ENCODE measurements at regions of chr14 and their contacts with region 1.

Region 1: DNA sequence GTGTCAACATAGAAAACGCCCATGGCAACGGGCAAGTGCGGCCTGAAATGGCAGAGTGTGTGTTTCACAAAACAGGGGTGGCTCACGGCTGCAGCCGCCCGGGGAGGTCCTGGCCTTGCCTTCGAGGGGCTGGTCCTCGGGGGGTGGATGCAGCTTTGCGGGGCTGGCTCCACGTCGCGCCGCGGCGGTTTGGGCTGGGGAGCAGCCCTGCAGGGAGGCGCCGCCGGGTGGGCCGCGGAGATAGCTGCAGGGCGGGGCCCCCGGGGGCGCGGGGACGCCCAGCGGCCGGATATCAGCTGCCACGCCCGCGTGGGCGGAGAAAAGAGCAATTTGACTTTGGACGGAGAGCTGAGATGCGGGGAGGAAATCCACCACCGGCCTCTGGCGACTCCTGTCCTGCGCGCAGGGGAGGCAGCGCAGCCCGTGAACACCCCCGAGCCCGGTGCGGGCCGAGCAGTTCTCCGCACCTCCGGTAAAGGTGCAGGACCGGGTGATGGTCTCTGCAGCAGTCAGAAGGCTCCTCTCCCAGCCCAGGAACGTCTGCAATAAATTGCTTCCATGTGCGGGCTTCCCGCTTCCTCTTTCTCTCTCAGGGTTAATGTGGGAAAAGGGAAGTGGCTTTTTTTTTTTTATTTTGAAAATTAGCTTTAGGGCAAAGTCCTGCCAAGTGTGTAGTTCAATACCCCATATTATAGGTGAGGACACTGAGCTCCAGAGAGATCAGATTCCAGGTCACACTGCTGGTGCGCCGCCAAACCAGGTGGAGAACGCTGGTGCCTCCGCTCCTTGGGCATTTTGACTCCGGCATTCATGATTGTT is 110.5 kb downstream of the ARF6 start:
- DNase-seq: peak; percentile 89 to 90
- H3K4me3 ChIP-seq: peak overlapping the region; percentile 49
- H3K4me3 Mint-ChIP-seq: peak overlapping the region; percentile 88
- H3K27ac Mint-ChIP-seq: peak overlapping the region; percentile 97
- H3K4me1 ChIP-seq: peaks cover 76% of the 10 kb centered on the region
- H3K4me1 Mint-ChIP-seq: peaks cover 41% of the 10 kb centered on the region
- H3K27me3 ChIP-seq: no peaks in the 10 kb centered on the region
- H3K27me3 Mint-ChIP-seq: no peaks in the 10 kb centered on the region
- CTCF ChIP-seq: peak; percentile 19 to 27

Region 2: GRCh38 chr14:49862089-49862673 is 141.2 kb before region 1 on chr14:
- CTCF ChIA-PET with region 1: interaction called, 14 read pairs
- POLR2A ChIA-PET with region 1: interaction called, 9 read pairs
- intact Hi-C with region 1: loop called (anchors 1 kb)
- DNase-seq: peak; percentile 77 to 84
- H3K4me3 ChIP-seq: peak overlapping the region; percentile 69
- H3K4me3 Mint-ChIP-seq: no peak overlapping the region
- H3K27ac Mint-ChIP-seq: no peak overlapping the region
- H3K4me1 ChIP-seq: peaks cover 5% of the 10 kb centered on the region; the same call in 1 of the 2 replicates
- H3K4me1 Mint-ChIP-seq: peaks cover 11% of the 10 kb centered on the region
- H3K27me3 ChIP-seq: no peaks in the 10 kb centered on the region
- H3K27me3 Mint-ChIP-seq: peaks cover 3% of the 10 kb centered on the region
- CTCF ChIP-seq: peak; percentile 100

Region 3: GRCh38 chr14:49892636-49893308 is 110.7 kb before region 1 on chr14 and contains the start of gene ARF6:
- CTCF ChIA-PET with region 1: interaction called, 13 read pairs
- POLR2A ChIA-PET with region 1: interaction called, 13 read pairs
- intact Hi-C with region 1: loop called (anchors 1 kb)
- DNase-seq: peak; percentile 98 to 99
- H3K4me3 ChIP-seq: peak within 1 kb of the TSS; percentile 84
- H3K4me3 Mint-ChIP-seq: peak within 1 kb of the TSS; percentile 91
- H3K27ac Mint-ChIP-seq: peak within 1 kb of the TSS; percentile 98
- H3K4me1 ChIP-seq: peaks cover 18% of the 10 kb centered on the region
- H3K4me1 Mint-ChIP-seq: peaks cover 32% of the 10 kb centered on the region
- H3K27me3 ChIP-seq: no peaks in the 10 kb centered on the region
- H3K27me3 Mint-ChIP-seq: no peaks in the 10 kb centered on the region
- CTCF ChIP-seq: no peak
- total RNA-seq, gene ARF6: 58.1 and 58.8 TPM in 2 replicates

Region 4: DNA sequence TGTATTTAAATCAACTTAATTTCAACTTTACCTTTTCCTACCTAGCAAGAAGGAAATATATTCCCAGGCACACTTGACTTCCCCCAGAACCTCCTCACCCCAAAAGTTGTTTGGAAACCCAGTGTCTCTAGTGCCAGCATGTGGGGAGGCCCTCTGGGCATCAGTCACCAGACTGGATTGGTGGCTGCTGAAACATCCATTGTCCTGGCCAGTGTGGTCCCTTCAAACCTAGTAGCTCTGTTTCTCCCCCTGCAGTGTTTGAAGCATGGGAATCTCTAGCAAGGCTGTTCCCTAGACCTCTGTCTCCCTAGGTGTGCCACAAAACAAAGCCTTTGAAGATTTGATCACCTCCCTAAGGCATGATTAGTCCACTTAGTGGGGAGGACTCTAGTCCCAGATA is 50.3 kb before region 1 on chr14:
- CTCF ChIA-PET with region 1: no interaction called
- POLR2A ChIA-PET with region 1: no interaction called
- intact Hi-C with region 1: no loop called
- DNase-seq: no peak
- H3K4me3 ChIP-seq: no peak overlapping the region
- H3K4me3 Mint-ChIP-seq: no peak overlapping the region
- H3K27ac Mint-ChIP-seq: no peak overlapping the region
- H3K4me1 ChIP-seq: peaks cover 20% of the 10 kb centered on the region
- H3K4me1 Mint-ChIP-seq: peaks cover 14% of the 10 kb centered on the region
- H3K27me3 ChIP-seq: no peaks in the 10 kb centered on the region
- H3K27me3 Mint-ChIP-seq: no peaks in the 10 kb centered on the region
- CTCF ChIP-seq: no peak

Region 5: GRCh38 chr14:49966304-49966809 is 37.1 kb before region 1 on chr14:
- CTCF ChIA-PET with region 1: interaction called, 4 read pairs
- POLR2A ChIA-PET with region 1: interaction called, 10 read pairs
- intact Hi-C with region 1: loop called (anchors 1 kb)
- DNase-seq: peak; percentile 86 to 91
- H3K4me3 ChIP-seq: 0 out of 2 replicates have a peak overlapping the region, but pooled peaks have one; percentile 1
- H3K4me3 Mint-ChIP-seq: peak overlapping the region; percentile 61
- H3K27ac Mint-ChIP-seq: peak overlapping the region; percentile 89
- H3K4me1 ChIP-seq: peaks cover 53% of the 10 kb centered on the region
- H3K4me1 Mint-ChIP-seq: peaks cover 61% of the 10 kb centered on the region
- H3K27me3 ChIP-seq: no peaks in the 10 kb centered on the region
- H3K27me3 Mint-ChIP-seq: no peaks in the 10 kb centered on the region
- CTCF ChIP-seq: no peak

Region 6: GRCh38 chr14:50031602-50032290 is 28.3 kb after region 1 on chr14:
- CTCF ChIA-PET with region 1: no interaction called
- POLR2A ChIA-PET with region 1: no interaction called
- intact Hi-C with region 1: no loop called
- DNase-seq: no peak
- H3K4me3 ChIP-seq: no peak overlapping the region
- H3K4me3 Mint-ChIP-seq: no peak overlapping the region
- H3K27ac Mint-ChIP-seq: peak overlapping the region; percentile 14
- H3K4me1 ChIP-seq: peaks cover 3% of the 10 kb centered on the region; the same call in 1 of the 2 replicates
- H3K4me1 Mint-ChIP-seq: peaks cover 20% of the 10 kb centered on the region
- H3K27me3 ChIP-seq: no peaks in the 10 kb centered on the region
- H3K27me3 Mint-ChIP-seq: no peaks in the 10 kb centered on the region
- CTCF ChIP-seq: no peak

Region 7: DNA sequence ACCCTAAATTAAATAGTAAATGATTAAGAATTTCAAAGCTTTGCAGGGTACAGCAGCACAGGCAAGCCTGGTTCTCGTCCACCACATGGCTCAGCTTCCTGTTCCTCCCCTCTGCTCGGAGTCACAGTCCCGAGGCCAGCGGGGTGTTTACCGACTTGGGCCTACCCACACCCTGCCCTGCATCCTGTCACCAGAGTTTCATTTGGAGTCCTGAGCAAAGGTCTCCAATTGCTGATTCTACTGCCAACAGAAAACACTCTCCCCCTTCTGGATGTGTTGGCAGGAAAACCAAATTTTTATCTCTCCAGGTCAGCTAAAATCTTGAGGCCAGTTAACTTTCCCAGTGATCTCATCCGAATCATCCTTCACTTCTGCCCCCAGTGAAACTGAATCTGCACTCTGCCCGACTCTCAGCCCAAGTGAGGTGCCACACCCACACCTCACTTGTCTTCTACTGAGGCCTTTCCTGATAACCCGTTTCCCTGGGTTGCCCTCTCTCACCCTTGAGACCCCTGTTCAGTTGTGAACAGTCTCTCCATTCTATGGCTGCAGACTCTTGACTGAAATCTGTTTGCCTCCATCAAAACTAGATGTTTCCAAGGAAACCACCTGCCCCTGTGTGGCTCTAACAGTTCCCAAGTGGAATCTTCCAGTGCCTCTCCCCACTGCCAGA is 41.8 kb after region 1 on chr14:
- CTCF ChIA-PET with region 1: interaction called, 3 read pairs
- POLR2A ChIA-PET with region 1: no interaction called
- intact Hi-C with region 1: loop called (anchors 2 kb)
- DNase-seq: peak; percentile 7 to 64
- H3K4me3 ChIP-seq: no peak overlapping the region
- H3K4me3 Mint-ChIP-seq: no peak overlapping the region
- H3K27ac Mint-ChIP-seq: peak overlapping the region; percentile 36
- H3K4me1 ChIP-seq: peaks cover 58% of the 10 kb centered on the region
- H3K4me1 Mint-ChIP-seq: peaks cover 31% of the 10 kb centered on the region
- H3K27me3 ChIP-seq: no peaks in the 10 kb centered on the region
- H3K27me3 Mint-ChIP-seq: no peaks in the 10 kb centered on the region
- CTCF ChIP-seq: no peak

Region 8: DNA sequence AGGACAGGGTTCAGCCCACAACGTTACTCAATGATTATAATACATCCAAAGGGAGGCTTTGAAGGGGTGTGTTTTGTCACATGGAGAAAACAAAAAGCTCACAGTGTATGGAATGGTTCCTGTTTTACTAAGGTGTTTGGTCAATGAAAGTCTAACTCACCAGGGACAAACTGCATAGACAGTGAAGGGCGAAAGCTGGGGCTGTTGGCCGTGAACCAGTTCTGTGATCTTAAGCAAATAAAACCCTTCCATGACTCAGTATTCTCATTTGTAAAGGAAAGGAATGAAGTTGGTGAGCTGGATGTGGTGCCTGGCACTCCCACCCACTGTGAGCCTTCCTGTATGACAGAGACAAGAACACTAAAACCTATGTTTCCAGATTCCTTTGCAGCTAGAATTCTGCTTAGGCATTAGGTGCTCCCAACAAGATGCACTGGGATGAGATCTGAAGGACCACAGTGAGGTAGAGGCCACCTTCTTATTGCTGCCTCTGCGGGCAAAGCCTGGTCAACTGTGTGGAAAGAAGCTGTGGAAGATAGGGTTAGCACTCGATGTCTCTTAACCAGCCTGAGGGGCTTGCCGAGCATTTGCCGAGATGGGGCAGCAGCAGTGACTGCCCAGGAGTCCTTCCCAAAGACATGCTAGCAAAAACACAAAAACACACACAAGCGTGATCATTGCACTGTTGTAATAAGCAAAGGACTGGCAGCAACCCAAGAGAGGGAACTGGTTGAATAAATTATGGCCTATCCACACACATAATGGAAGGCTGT is 64.5 kb after region 1 on chr14:
- CTCF ChIA-PET with region 1: interaction called, 11 read pairs
- POLR2A ChIA-PET with region 1: interaction called, 6 read pairs
- intact Hi-C with region 1: no loop called
- DNase-seq: no peak
- H3K4me3 ChIP-seq: no peak overlapping the region
- H3K4me3 Mint-ChIP-seq: no peak overlapping the region
- H3K27ac Mint-ChIP-seq: peak overlapping the region; percentile 78
- H3K4me1 ChIP-seq: peaks cover 55% of the 10 kb centered on the region
- H3K4me1 Mint-ChIP-seq: peaks cover 32% of the 10 kb centered on the region
- H3K27me3 ChIP-seq: no peaks in the 10 kb centered on the region
- H3K27me3 Mint-ChIP-seq: no peaks in the 10 kb centered on the region
- CTCF ChIP-seq: no peak